HepG2 (cell line): ENCODE measurements at regions of chr6 and their contacts with region 1.

Region 1: GRCh38 chr6:160041608-160042007 is 72.7 kb downstream of the IGF2R start:
- DNase-seq: peak; percentile 22
- ATAC-seq: peak; percentile 51
- H3K4me3 ChIP-seq: no peak overlapping the region
- H3K27ac ChIP-seq: peak overlapping the region; percentile 68
- H3K4me1 ChIP-seq: peaks cover 34% of the 10 kb centered on the region
- H3K27me3 ChIP-seq: no peaks in the 10 kb centered on the region
- CTCF ChIP-seq: 0 out of 2 replicates have a peak, but pooled peaks have one; percentile 19
- EP300 ChIP-seq: no peak
- POLR2A ChIP-seq: no peak
- RAD21 ChIP-seq: peak; percentile 31; the same call in 1 of the 2 replicates

Region 2: DNA sequence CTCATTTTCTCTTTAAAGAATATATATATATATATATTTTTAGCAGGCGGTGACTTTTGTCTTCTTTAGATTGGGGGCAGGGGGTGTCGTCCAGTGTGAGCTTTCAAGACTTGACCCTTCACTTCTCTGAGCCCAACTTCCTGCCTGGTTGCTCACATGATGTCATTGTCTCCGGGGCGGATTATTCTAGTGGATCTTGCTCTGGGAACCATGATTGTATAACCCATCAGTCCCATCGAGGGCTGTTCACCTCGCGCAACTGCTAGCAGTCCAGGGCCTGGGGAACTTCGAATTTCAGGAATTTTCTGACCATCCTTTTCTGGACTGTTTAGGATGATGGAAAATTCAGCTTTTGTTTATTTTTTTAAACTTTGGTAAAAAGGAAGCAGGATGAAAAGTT is 71.7 kb before region 1 on chr6:
- CTCF ChIA-PET with region 1: no interaction called
- POLR2A ChIA-PET with region 1: interaction called, 6 read pairs
- in situ Hi-C with region 1: loop called (anchors 5 kb)
- intact Hi-C with region 1: no loop called
- DNase-seq: peak; percentile 92
- ATAC-seq: peak; percentile 70
- H3K4me3 ChIP-seq: peak overlapping the region; percentile 91 to 94 (median 92)
- H3K27ac ChIP-seq: peak overlapping the region; percentile 87
- H3K4me1 ChIP-seq: peaks cover 59% of the 10 kb centered on the region
- H3K27me3 ChIP-seq: peaks cover 0 to 5% of the 10 kb centered on the region in 2 experiments; a peak in 2 of 5 replicates
- CTCF ChIP-seq: no peak
- EP300 ChIP-seq: no peak
- POLR2A ChIP-seq: peak; percentile 61 to 76
- RAD21 ChIP-seq: no peak

Region 3: GRCh38 chr6:160015778-160016684 is 25.6 kb before region 1 on chr6:
- CTCF ChIA-PET with region 1: no interaction called
- POLR2A ChIA-PET with region 1: no interaction called
- in situ Hi-C with region 1: no loop called
- intact Hi-C with region 1: no loop called
- DNase-seq: no peak
- ATAC-seq: no peak
- H3K4me3 ChIP-seq: no peak overlapping the region
- H3K27ac ChIP-seq: no peak overlapping the region
- H3K4me1 ChIP-seq: peaks cover 19% of the 10 kb centered on the region
- H3K27me3 ChIP-seq: no peaks in the 10 kb centered on the region
- CTCF ChIP-seq: no peak
- EP300 ChIP-seq: no peak
- POLR2A ChIP-seq: no peak
- RAD21 ChIP-seq: no peak